Naive thymus-derived CD4-positive, alpha-beta T cell (primary cell): ENCODE measurements at regions of chr10 and their contacts with region 1.

Region 1: GRCh38 chr10:7121154-7121810 is 289.6 kb downstream of the SFMBT2 start:
- DNase-seq: peak; percentile 54 to 86 (median 79)
- ATAC-seq: peak; percentile 97
- H3K4me3 ChIP-seq: no peak overlapping the region
- H3K4me3 Mint-ChIP-seq: peak overlapping the region in 1 of 10 donors; percentile 42
- H3K27ac ChIP-seq: no peak overlapping the region
- H3K27ac Mint-ChIP-seq: peak overlapping the region; percentile 36 to 97 (median 85)
- H3K4me1 ChIP-seq: no peaks in the 10 kb centered on the region
- H3K4me1 Mint-ChIP-seq: peaks cover 6 to 13% (median 8%) of the 10 kb centered on the region in 7 donors
- H3K27me3 ChIP-seq: no peaks in the 10 kb centered on the region
- H3K27me3 Mint-ChIP-seq: peaks cover 0 to 44% (median 0%) of the 10 kb centered on the region in 5 donors

Region 2: GRCh38 chr10:6920072-6921019 is 200.9 kb before region 1 on chr10:
- CTCF ChIA-PET with region 1: interaction called, 3 read pairs
- POLR2A ChIA-PET with region 1: no interaction called
- intact Hi-C with region 1: loop called (anchors 1 kb)
- DNase-seq: peak; percentile 47 to 74 (median 69)
- ATAC-seq: peak; percentile 97
- H3K4me3 ChIP-seq: no peak overlapping the region
- H3K4me3 Mint-ChIP-seq: peak overlapping the region in 7 of 10 donors; percentile 13 to 45 (median 26)
- H3K27ac ChIP-seq: no peak overlapping the region
- H3K27ac Mint-ChIP-seq: no peak overlapping the region
- H3K4me1 ChIP-seq: peaks cover 0 to 21% of the 10 kb centered on the region in 2 donors
- H3K4me1 Mint-ChIP-seq: peaks cover 0 to 25% (median 12%) of the 10 kb centered on the region in 7 donors
- H3K27me3 ChIP-seq: no peaks in the 10 kb centered on the region
- H3K27me3 Mint-ChIP-seq: peaks cover 0 to 14% (median 5%) of the 10 kb centered on the region in 5 donors

Region 3: DNA sequence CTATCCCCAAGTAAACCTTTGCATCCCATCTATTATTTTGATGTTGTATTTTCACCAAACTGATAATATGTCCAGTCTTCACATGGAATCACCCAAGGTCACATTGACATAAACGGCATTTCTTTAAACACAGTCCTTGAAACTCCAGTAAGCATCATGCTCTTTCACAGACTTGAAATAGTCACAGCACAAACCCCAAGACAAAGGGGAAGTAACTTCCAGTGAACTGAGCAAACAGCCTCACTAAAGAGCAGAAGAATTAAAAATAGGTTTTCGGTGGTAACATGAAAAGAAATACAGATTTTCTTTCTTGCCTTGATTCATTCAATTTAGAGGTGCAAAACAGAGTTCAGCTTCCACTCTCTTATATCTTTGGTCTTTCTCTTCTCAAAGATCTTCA is 35.8 kb after region 1 on chr10:
- CTCF ChIA-PET with region 1: interaction called, 3 read pairs
- POLR2A ChIA-PET with region 1: no interaction called
- intact Hi-C with region 1: loop called in 1 of 2 experiments (anchors 1 kb)
- DNase-seq: no peak
- ATAC-seq: peak; percentile 52
- H3K4me3 ChIP-seq: no peak overlapping the region
- H3K4me3 Mint-ChIP-seq: no peak overlapping the region
- H3K27ac ChIP-seq: no peak overlapping the region
- H3K27ac Mint-ChIP-seq: peak overlapping the region in 4 of 9 donors; percentile 16 to 59 (median 42)
- H3K4me1 ChIP-seq: peaks cover 12 to 17% of the 10 kb centered on the region in 2 donors
- H3K4me1 Mint-ChIP-seq: peaks cover 15 to 51% (median 40%) of the 10 kb centered on the region in 7 donors
- H3K27me3 ChIP-seq: no peaks in the 10 kb centered on the region
- H3K27me3 Mint-ChIP-seq: peaks cover 0 to 7% (median 0%) of the 10 kb centered on the region in 5 donors

Region 4: GRCh38 chr10:7260412-7260900 is 139.2 kb after region 1 on chr10:
- CTCF ChIA-PET with region 1: interaction called, 3 read pairs
- POLR2A ChIA-PET with region 1: no interaction called
- intact Hi-C with region 1: loop called (anchors 1 to 5 kb)
- DNase-seq: peak in 3 of 9 donors; percentile 16 to 33 (median 31)
- ATAC-seq: peak; percentile 73
- H3K4me3 ChIP-seq: no peak overlapping the region
- H3K4me3 Mint-ChIP-seq: peak overlapping the region in 8 of 10 donors; percentile 29 to 75 (median 61)
- H3K27ac ChIP-seq: no peak overlapping the region
- H3K27ac Mint-ChIP-seq: peak overlapping the region; percentile 51 to 94 (median 86)
- H3K4me1 ChIP-seq: peaks cover 27 to 30% of the 10 kb centered on the region in 2 donors
- H3K4me1 Mint-ChIP-seq: peaks cover 42 to 64% (median 57%) of the 10 kb centered on the region in 7 donors
- H3K27me3 ChIP-seq: no peaks in the 10 kb centered on the region
- H3K27me3 Mint-ChIP-seq: no peaks in the 10 kb centered on the region

Region 5: GRCh38 chr10:7265396-7266123 is 144.3 kb after region 1 on chr10:
- CTCF ChIA-PET with region 1: interaction called, 3 read pairs
- POLR2A ChIA-PET with region 1: no interaction called
- intact Hi-C with region 1: loop called (anchors 1 to 5 kb)
- DNase-seq: no peak
- ATAC-seq: no peak
- H3K4me3 ChIP-seq: no peak overlapping the region
- H3K4me3 Mint-ChIP-seq: no peak overlapping the region
- H3K27ac ChIP-seq: no peak overlapping the region
- H3K27ac Mint-ChIP-seq: peak overlapping the region in 5 of 9 donors; percentile 36 to 84 (median 76)
- H3K4me1 ChIP-seq: peaks cover 6 to 13% of the 10 kb centered on the region in 2 donors
- H3K4me1 Mint-ChIP-seq: peaks cover 16 to 52% (median 38%) of the 10 kb centered on the region in 7 donors
- H3K27me3 ChIP-seq: no peaks in the 10 kb centered on the region
- H3K27me3 Mint-ChIP-seq: no peaks in the 10 kb centered on the region

Region 6: GRCh38 chr10:7417103-7417623 is 295.9 kb after region 1 on chr10:
- CTCF ChIA-PET with region 1: interaction called, 22 read pairs
- POLR2A ChIA-PET with region 1: interaction called, 4 read pairs
- intact Hi-C with region 1: loop called (anchors 1 kb)
- DNase-seq: peak in 7 of 9 donors; percentile 36 to 62 (median 46)
- ATAC-seq: peak; percentile 69
- H3K4me3 ChIP-seq: no peak overlapping the region
- H3K4me3 Mint-ChIP-seq: no peak overlapping the region
- H3K27ac ChIP-seq: no peak overlapping the region
- H3K27ac Mint-ChIP-seq: peak overlapping the region in 3 of 9 donors; percentile 27 to 79 (median 29)
- H3K4me1 ChIP-seq: peaks cover 5 to 10% of the 10 kb centered on the region in 2 donors
- H3K4me1 Mint-ChIP-seq: peaks cover 8 to 35% (median 25%) of the 10 kb centered on the region in 7 donors
- H3K27me3 ChIP-seq: no peaks in the 10 kb centered on the region
- H3K27me3 Mint-ChIP-seq: peaks cover 0 to 33% (median 0%) of the 10 kb centered on the region in 5 donors